Dorsolateral prefrontal cortex (tissue), 120 donors: ENCODE measurements at regions of chr20 and their contacts with region 1.

Region 1: GRCh38 chr20:7285918-7286556 is 518.6 kb downstream of the BMP2 start:
- DNase-seq: peak; percentile 31 to 89 (median 73)
- H3K4me3 ChIP-seq: no peak overlapping the region
- H3K27ac ChIP-seq: no peak overlapping the region
- H3K27me3 ChIP-seq: peaks cover 0 to 6% (median 0%) of the 10 kb centered on the region in 45 donors
- CTCF ChIP-seq: peak; percentile 63 to 98 (median 90)

Region 2: DNA sequence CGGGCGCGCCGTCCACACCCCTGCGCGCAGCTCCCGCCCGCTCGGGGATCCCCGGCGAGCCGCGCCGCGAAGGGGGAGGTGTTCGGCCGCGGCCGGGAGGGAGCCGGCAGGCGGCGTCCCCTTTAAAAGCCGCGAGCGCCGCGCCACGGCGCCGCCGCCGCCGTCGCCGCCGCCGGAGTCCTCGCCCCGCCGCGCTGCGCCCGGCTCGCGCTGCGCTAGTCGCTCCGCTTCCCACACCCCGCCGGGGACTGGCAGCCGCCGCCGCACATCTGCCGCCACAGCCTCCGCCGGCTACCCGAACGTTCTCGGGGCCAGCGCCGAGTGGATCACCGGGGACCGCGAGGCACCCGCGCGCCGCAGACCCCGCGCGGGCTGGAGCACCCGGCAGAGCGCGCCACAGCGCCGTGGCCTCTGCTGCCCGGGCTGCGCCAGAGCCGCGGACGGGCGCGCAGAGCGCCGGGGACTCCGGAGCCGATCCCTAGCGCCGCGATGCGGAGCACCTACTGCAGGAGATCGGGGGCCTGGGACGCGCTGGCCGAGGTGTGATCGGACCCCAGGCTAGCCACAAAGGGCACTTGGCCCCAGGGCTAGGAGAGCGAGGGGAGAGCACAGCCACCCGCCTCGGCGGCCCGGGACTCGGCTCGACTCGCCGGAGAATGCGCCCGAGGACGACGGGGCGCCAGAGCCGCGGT is 518.4 kb before region 1 on chr20 and contains the start of gene BMP2:
- intact Hi-C with region 1: loop called in 1 of 2 experiments (anchors 5 kb)
- DNase-seq: peak in 7 of 10 donors; percentile 40 to 79 (median 46)
- H3K4me3 ChIP-seq: peak within 1 kb of the TSS; percentile 59 to 90 (median 75)
- H3K27ac ChIP-seq: peak within 1 kb of the TSS in 51 of 59 donors; percentile 23 to 88 (median 72)
- H3K27me3 ChIP-seq: peaks cover 0 to 3% (median 0%) of the 10 kb centered on the region in 45 donors
- CTCF ChIP-seq: peak in 16 of 56 donors; percentile 1 to 23 (median 12)
- total RNA-seq, gene BMP2: 1.6 to 8.8 (median 3.1) TPM

Region 3: DNA sequence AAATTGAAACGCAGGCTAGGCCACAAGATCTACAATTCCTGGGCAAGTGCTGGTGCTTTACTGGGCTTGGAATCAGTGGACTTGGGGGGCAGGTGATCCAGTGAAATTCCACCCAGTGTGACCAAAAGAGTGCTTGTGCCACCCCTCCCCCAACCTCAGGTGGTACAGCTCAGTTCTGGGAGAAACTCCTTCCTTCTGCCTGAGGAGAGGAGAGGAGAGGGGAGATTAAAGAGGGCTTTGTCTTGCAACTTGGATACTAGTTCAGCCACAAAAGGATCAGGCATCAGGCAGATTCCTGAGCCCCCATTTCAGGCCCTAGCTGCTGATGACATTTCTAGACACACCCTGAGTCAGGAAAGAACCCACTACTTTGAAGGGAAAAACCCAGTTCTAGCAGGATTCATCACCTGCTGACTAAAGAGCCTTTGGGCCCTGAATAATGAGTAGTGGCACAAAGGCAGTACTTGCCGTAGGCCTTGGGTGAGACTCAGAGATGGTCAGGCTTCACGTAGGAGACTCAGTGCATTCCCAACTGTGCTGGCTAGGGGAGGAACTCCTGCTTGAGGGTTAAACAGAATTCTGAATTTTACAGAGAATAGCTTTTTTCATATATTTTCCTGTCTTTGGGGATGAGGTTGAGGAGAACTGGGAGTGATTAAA is 71.8 kb before region 1 on chr20:
- intact Hi-C with region 1: no loop called
- DNase-seq: no peak
- H3K4me3 ChIP-seq: no peak overlapping the region
- H3K27ac ChIP-seq: no peak overlapping the region
- H3K27me3 ChIP-seq: no peaks in the 10 kb centered on the region
- CTCF ChIP-seq: no peak

Region 4: DNA sequence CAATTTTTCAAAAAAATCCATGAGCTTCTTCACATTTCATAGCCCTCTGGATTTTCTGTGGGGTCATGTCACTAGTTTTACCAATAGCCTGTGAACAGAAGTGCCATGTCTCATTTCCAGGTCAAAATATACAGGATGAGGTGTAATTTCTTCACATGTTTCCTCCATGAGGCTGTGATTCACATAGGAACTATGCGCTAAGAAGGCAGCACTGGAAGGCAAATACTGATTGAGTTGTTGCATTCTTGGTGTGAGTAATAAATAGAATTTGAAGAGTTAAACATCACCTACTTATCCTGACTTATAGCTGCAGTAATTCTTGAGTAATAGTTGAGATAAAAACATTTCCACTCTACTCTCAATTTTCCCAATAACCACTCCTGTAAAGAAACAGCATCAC is 211.9 kb after region 1 on chr20:
- intact Hi-C with region 1: no loop called
- DNase-seq: no peak
- H3K4me3 ChIP-seq: no peak overlapping the region
- H3K27ac ChIP-seq: no peak overlapping the region
- H3K27me3 ChIP-seq: no peaks in the 10 kb centered on the region
- CTCF ChIP-seq: no peak